Gastrocnemius medialis (tissue), 4 donors: ENCODE measurements at regions of chr18 and their contacts with region 1.

Region 1: GRCh38 chr18:35005963-35006577 is 35.1 kb upstream of the MAPRE2 start:
- DNase-seq: no peak
- ATAC-seq: peak; percentile 97 to 98
- H3K4me3 ChIP-seq: no peak overlapping the region
- H3K27ac ChIP-seq: peak overlapping the region in 3 of 4 donors; percentile 19 to 36 (median 35)
- H3K4me1 ChIP-seq: peaks cover 7 to 8% of the 10 kb centered on the region in 2 donors
- H3K27me3 ChIP-seq: no peaks in the 10 kb centered on the region
- CTCF ChIP-seq: peak; percentile 51 to 80 (median 66)
- POLR2A ChIP-seq: no peak

Region 2: GRCh38 chr18:34643989-34644388 is 362.1 kb before region 1 on chr18:
- in situ Hi-C with region 1: no loop called
- intact Hi-C with region 1: no loop called
- DNase-seq: no peak
- ATAC-seq: no peak
- H3K4me3 ChIP-seq: no peak overlapping the region
- H3K27ac ChIP-seq: peak overlapping the region; percentile 35 to 87 (median 86)
- H3K4me1 ChIP-seq: peaks cover 43 to 48% of the 10 kb centered on the region in 2 donors
- H3K27me3 ChIP-seq: no peaks in the 10 kb centered on the region
- CTCF ChIP-seq: peak in 2 of 5 experiments; percentile 13 to 22
- POLR2A ChIP-seq: no peak

Region 3: GRCh38 chr18:34947711-34948125 is 58.4 kb before region 1 on chr18:
- in situ Hi-C with region 1: no loop called
- intact Hi-C with region 1: loop called (anchors 10 kb)
- DNase-seq: peak; percentile 31 to 36
- ATAC-seq: peak; percentile 75 to 86
- H3K4me3 ChIP-seq: no peak overlapping the region
- H3K27ac ChIP-seq: peak overlapping the region; percentile 76 to 83 (median 80)
- H3K4me1 ChIP-seq: peaks cover 30 to 42% of the 10 kb centered on the region in 2 donors
- H3K27me3 ChIP-seq: no peaks in the 10 kb centered on the region
- CTCF ChIP-seq: no peak
- POLR2A ChIP-seq: no peak

Region 4: GRCh38 chr18:35085450-35086380 is 79.6 kb after region 1 on chr18:
- in situ Hi-C with region 1: no loop called
- intact Hi-C with region 1: no loop called
- DNase-seq: peak in 1 of 2 donors; percentile 28
- ATAC-seq: peak; percentile 74 to 75
- H3K4me3 ChIP-seq: no peak overlapping the region
- H3K27ac ChIP-seq: peak overlapping the region; percentile 83 to 87 (median 84)
- H3K4me1 ChIP-seq: peaks cover 73 to 76% of the 10 kb centered on the region in 2 donors
- H3K27me3 ChIP-seq: no peaks in the 10 kb centered on the region
- CTCF ChIP-seq: peak in 1 of 5 experiments; percentile 23
- POLR2A ChIP-seq: peak; percentile 15 to 31

Region 5: DNA sequence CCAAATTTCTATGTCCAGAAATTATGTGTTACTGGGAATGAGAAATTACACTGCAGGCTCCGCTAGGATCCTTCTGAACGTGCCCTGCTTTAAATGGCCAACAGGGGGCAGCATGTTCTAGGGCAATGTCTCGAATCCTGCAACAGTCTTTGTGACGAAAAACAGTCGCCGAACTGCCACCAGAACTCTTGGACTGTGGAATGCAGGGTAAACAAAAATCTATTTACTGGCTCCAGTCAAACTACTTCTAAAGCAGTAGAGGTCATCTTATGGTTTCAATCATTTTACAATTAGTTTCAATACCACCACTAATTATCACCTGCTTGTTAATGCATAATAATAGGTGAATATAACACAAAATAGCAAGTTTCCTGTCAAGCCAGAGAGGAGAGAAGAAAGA is 225.0 kb after region 1 on chr18:
- in situ Hi-C with region 1: no loop called
- intact Hi-C with region 1: loop called (anchors 5 kb)
- DNase-seq: peak; percentile 65 to 77
- ATAC-seq: peak; percentile 99
- H3K4me3 ChIP-seq: peak overlapping the region; percentile 16 to 49 (median 28)
- H3K27ac ChIP-seq: no peak overlapping the region
- H3K4me1 ChIP-seq: no peaks in the 10 kb centered on the region
- H3K27me3 ChIP-seq: no peaks in the 10 kb centered on the region
- CTCF ChIP-seq: peak; percentile 80 to 96 (median 83)
- POLR2A ChIP-seq: no peak

Region 6: GRCh38 chr18:35355140-35355618 is 349.1 kb after region 1 on chr18:
- in situ Hi-C with region 1: loop called in 2 of 4 experiments (anchors 25 kb)
- intact Hi-C with region 1: no loop called
- DNase-seq: peak; percentile 46 to 72
- ATAC-seq: peak; percentile 98 to 100
- H3K4me3 ChIP-seq: peak overlapping the region in 2 of 4 donors; percentile 23 to 42
- H3K27ac ChIP-seq: peak overlapping the region in 2 of 4 donors; percentile 26 to 44
- H3K4me1 ChIP-seq: peaks cover 4 to 9% of the 10 kb centered on the region in 2 donors
- H3K27me3 ChIP-seq: no peaks in the 10 kb centered on the region
- CTCF ChIP-seq: peak; percentile 47 to 80 (median 60)
- POLR2A ChIP-seq: no peak